ENCODE measurements at regions of chr9 and their contacts with region 1.

Region 1: DNA sequence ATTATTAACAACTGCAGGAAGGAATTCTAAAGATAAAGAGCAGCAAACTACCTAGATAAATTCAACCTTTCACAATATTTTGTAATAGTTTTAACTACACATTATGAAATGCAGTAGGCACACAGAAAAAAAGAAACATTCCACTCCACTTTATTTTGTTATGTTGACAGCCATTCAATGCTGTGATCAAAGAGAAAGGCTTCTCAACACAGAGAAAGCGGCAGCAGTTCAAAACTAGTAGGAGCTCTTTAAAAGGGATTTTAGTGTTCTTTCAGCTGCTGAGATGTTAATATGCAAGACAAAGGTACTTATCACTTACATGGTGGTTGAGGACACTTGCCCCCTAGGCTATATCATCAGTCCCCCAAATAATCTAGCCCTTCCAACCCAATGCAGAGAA is 11.6 kb downstream of the CEMIP2 start:
- DNase-seq: no peak
- H3K4me3 ChIP-seq: no peak overlapping the region
- H3K4me3 Mint-ChIP-seq: no peak overlapping the region
- H3K27ac Mint-ChIP-seq: no peak overlapping the region
- H3K4me1 ChIP-seq: 0 out of 2 replicates have a peak, but pooled peaks cover 4% of the 10 kb centered on the region
- H3K4me1 Mint-ChIP-seq: peaks cover 6% of the 10 kb centered on the region
- H3K27me3 ChIP-seq: no peaks in the 10 kb centered on the region
- H3K27me3 Mint-ChIP-seq: no peaks in the 10 kb centered on the region
- CTCF ChIP-seq: no peak

Region 2: DNA sequence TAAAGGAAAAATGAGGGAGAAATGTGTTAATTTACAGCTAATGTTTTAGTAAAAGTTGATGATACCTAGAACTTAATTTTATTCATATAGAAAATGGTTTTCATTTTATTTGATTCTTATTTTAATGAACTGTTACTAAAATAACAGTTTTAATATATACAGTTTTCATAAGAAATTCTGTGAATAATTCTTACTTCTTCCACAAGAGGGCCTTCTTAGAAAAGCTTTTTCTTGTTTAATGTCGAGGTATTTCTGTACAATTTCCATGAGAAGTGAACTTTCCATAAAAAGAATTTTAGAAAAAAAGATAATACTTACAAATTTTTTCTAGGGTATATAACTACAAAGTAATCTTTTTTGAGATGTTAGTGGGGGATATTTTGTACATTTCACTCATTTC is 1416.2 kb before region 1 on chr9:
- CTCF ChIA-PET with region 1: no interaction called
- POLR2A ChIA-PET with region 1: no interaction called
- intact Hi-C with region 1: no loop called
- DNase-seq: no peak
- H3K4me3 ChIP-seq: no peak overlapping the region
- H3K4me3 Mint-ChIP-seq: no peak overlapping the region
- H3K27ac Mint-ChIP-seq: no peak overlapping the region
- H3K4me1 ChIP-seq: no peaks in the 10 kb centered on the region
- H3K4me1 Mint-ChIP-seq: no peaks in the 10 kb centered on the region
- H3K27me3 ChIP-seq: no peaks in the 10 kb centered on the region
- H3K27me3 Mint-ChIP-seq: no peaks in the 10 kb centered on the region
- CTCF ChIP-seq: no peak

Region 3: GRCh38 chr9:71741711-71742648 is 14.8 kb before region 1 on chr9:
- CTCF ChIA-PET with region 1: no interaction called
- POLR2A ChIA-PET with region 1: no interaction called
- intact Hi-C with region 1: loop called (anchors 2 kb)
- DNase-seq: peak; percentile 38 to 42
- H3K4me3 ChIP-seq: no peak overlapping the region
- H3K4me3 Mint-ChIP-seq: peak overlapping the region; percentile 36
- H3K27ac Mint-ChIP-seq: peak overlapping the region; percentile 57
- H3K4me1 ChIP-seq: peaks cover 13% of the 10 kb centered on the region
- H3K4me1 Mint-ChIP-seq: no peaks in the 10 kb centered on the region
- H3K27me3 ChIP-seq: no peaks in the 10 kb centered on the region
- H3K27me3 Mint-ChIP-seq: no peaks in the 10 kb centered on the region
- CTCF ChIP-seq: no peak

Measured in Caco-2 (cell line).